ENCODE measurements at regions of chr6 and their contacts with region 1.

Region 1: GRCh38 chr6:138044458-138044857 is 62.8 kb downstream of the PERP start:
- DNase-seq: no peak
- ATAC-seq: no peak
- H3K4me3 ChIP-seq: no peak overlapping the region
- H3K27ac ChIP-seq: no peak overlapping the region
- H3K4me1 ChIP-seq: no peaks in the 10 kb centered on the region
- CTCF ChIP-seq: no peak
- EP300 ChIP-seq: no peak
- POLR2A ChIP-seq: no peak
- RAD21 ChIP-seq: no peak

Region 2: GRCh38 chr6:137970368-137970767 is 74.1 kb before region 1 on chr6:
- CTCF ChIA-PET with region 1: no interaction called
- POLR2A ChIA-PET with region 1: no interaction called
- DNase-seq: no peak
- ATAC-seq: no peak
- H3K4me3 ChIP-seq: no peak overlapping the region
- H3K27ac ChIP-seq: no peak overlapping the region
- H3K4me1 ChIP-seq: no peaks in the 10 kb centered on the region
- CTCF ChIP-seq: no peak
- EP300 ChIP-seq: no peak
- POLR2A ChIP-seq: no peak
- RAD21 ChIP-seq: no peak

Region 3: GRCh38 chr6:138063726-138064125 is 19.3 kb after region 1 on chr6:
- CTCF ChIA-PET with region 1: no interaction called
- POLR2A ChIA-PET with region 1: interaction called, 10 read pairs
- DNase-seq: no peak
- ATAC-seq: no peak
- H3K4me3 ChIP-seq: no peak overlapping the region
- H3K27ac ChIP-seq: no peak overlapping the region
- H3K4me1 ChIP-seq: no peaks in the 10 kb centered on the region
- CTCF ChIP-seq: no peak
- EP300 ChIP-seq: no peak
- POLR2A ChIP-seq: no peak
- RAD21 ChIP-seq: no peak